Calu3 (cell line): ENCODE measurements at regions of chr2 and their contacts with region 1.

Region 1: DNA sequence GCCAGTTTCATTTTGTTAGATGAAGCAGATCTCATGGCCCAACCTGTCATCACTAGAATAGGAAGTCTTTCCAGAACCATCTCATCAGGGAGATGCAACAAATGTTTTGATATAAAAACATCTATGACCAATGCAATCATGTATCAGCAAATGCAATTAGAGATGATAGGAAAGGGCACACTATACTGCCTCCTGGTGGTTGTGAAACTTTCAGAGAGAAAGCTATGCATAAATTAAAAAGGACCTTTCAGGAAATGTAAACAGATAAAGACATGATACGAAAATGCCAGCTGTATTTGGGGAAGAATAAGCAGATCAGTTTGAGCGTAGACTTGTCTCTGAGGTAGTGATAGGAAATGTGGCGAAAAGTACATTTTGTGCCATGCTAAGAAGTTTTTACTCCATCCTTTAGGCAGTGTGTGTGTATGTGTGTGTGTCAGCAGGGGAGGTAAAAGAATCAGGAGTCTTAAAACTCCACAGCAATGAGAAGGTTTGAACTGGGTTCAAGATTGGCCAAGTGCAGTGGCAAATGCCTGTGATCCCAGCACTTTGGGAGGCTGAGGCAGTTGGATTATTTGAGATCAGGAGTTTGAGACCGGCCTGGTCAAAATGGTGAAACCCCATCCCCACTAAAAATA is 479.3 kb downstream of the CPS1 start:
- DNase-seq: peak; percentile 26
- H3K4me3 Mint-ChIP-seq: no peak overlapping the region
- H3K27ac Mint-ChIP-seq: no peak overlapping the region
- H3K4me1 Mint-ChIP-seq: peaks cover 10% of the 10 kb centered on the region
- H3K27me3 Mint-ChIP-seq: no peaks in the 10 kb centered on the region
- CTCF ChIP-seq: peak; percentile 49

Region 2: DNA sequence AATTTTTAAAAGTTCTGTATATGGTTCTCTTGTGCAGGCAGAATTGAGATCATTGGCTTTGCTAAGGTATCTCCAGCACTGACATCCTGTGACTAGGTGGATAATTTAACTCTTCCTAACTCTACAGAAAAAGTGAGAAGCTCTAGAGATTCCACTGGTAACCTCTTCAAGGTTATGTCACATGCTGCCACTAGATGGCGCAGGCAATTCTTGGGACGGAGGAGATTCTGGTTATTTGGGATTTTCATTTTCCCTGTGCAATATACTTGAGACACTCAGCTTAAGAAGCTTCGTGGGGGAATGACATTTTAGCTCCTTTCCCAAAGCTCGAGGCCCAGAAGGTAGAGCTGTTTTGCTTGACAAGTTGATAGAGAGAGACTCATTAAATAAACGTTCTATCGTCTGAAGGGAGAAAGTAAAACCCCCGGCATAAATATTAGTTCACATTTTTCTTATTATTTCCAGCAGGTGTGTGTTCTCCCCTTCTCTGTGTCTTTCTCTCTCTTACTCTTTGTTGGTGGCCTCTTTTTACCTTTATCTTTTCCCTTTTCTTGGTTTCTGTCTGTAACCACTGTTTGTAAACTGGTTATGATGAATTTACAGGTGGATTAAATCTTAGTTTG is 532.6 kb before region 1 on chr2:
- CTCF ChIA-PET with region 1: interaction called, 4 read pairs
- intact Hi-C with region 1: loop called (anchors 10 kb)
- DNase-seq: peak; percentile 57
- H3K4me3 Mint-ChIP-seq: peak overlapping the region; percentile 64
- H3K27ac Mint-ChIP-seq: peak overlapping the region; percentile 3
- H3K4me1 Mint-ChIP-seq: peaks cover 15% of the 10 kb centered on the region
- H3K27me3 Mint-ChIP-seq: no peaks in the 10 kb centered on the region
- CTCF ChIP-seq: peak; percentile 91

Region 3: GRCh38 chr2:210617732-210618330 is 417.8 kb before region 1 on chr2:
- CTCF ChIA-PET with region 1: no interaction called
- intact Hi-C with region 1: loop called (anchors 1 kb)
- DNase-seq: peak; percentile 39
- H3K4me3 Mint-ChIP-seq: no peak overlapping the region
- H3K27ac Mint-ChIP-seq: no peak overlapping the region
- H3K4me1 Mint-ChIP-seq: no peaks in the 10 kb centered on the region
- H3K27me3 Mint-ChIP-seq: no peaks in the 10 kb centered on the region
- CTCF ChIP-seq: peak; percentile 54

Region 4: GRCh38 chr2:210663631-210664089 is 372.0 kb before region 1 on chr2:
- CTCF ChIA-PET with region 1: no interaction called
- intact Hi-C with region 1: loop called (anchors 1 kb)
- DNase-seq: peak; percentile 21
- H3K4me3 Mint-ChIP-seq: no peak overlapping the region
- H3K27ac Mint-ChIP-seq: no peak overlapping the region
- H3K4me1 Mint-ChIP-seq: no peaks in the 10 kb centered on the region
- H3K27me3 Mint-ChIP-seq: no peaks in the 10 kb centered on the region
- CTCF ChIP-seq: peak; percentile 17

Region 5: DNA sequence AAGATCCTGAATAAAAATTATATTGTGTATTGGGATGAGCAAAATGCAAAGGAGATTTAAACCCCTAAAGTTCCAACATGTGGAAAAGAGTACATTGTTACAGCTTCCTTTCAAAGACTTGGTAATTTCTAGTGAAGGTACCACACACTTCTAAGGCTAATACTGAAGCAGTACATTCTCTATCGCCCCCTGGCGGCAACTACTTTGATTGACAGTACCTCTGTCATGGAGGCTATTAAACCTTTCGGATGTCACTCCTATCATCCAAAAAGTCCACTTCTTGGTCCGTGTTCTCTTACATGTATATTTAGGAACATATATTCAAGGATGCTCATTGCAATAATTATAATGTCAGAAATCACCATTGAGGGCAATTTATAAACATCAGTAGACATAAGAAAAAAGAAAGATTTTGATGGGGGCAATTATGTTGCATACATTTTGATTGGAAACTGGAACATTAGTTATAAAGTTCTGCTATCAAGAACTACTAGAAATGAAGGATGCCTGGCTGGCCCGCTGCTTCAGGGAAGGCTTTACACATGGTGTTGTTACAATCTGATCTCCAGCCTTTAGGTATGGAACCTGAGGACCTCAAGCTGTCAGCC is 122.3 kb after region 1 on chr2:
- CTCF ChIA-PET with region 1: no interaction called
- intact Hi-C with region 1: loop called (anchors 1 kb)
- DNase-seq: peak; percentile 80
- H3K4me3 Mint-ChIP-seq: no peak overlapping the region
- H3K27ac Mint-ChIP-seq: no peak overlapping the region
- H3K4me1 Mint-ChIP-seq: peaks cover 13% of the 10 kb centered on the region
- H3K27me3 Mint-ChIP-seq: no peaks in the 10 kb centered on the region
- CTCF ChIP-seq: peak; percentile 84

Region 6: DNA sequence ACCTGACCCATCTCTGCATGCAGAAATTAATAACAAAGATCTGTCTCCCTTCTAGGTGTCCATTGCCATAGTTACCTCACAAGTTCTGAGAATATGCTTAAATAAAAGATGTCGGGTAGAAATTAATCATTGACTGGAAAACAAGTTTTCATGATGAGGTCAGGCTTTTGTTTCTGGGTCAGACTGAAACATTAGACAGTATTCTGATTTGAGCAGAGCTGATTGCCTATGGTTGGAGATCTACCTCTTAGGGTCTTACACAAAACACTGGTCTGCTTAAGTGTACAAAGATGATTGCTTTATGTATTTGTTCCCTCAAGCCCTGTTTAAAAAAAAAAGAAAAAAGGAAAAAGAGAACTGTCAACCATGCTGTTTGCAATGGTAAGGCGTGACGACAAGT is 477.1 kb after region 1 on chr2:
- CTCF ChIA-PET with region 1: no interaction called
- intact Hi-C with region 1: no loop called
- DNase-seq: no peak
- H3K4me3 Mint-ChIP-seq: no peak overlapping the region
- H3K27ac Mint-ChIP-seq: peak overlapping the region; percentile 78
- H3K4me1 Mint-ChIP-seq: peaks cover 21% of the 10 kb centered on the region
- H3K27me3 Mint-ChIP-seq: no peaks in the 10 kb centered on the region
- CTCF ChIP-seq: no peak

Region 7: DNA sequence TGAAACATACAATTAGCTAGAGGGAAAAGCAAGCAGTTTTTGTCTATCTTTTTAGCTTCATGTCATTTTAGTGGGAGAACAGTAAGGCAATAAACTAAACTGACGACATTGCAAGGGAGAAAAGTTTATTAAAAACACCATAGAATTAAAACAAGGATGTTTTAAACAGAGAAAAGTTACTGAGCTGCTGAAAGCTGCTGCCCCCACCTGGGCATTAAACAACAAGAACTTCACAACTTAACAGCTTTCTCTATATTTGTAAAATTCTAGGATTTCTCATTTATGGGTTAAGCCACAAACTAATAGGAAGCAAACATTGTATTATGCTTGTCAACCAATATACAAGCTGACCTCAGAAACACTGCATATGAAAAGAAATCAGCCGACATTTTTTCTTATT is 1213.8 kb after region 1 on chr2:
- CTCF ChIA-PET with region 1: no interaction called
- intact Hi-C with region 1: loop called (anchors 10 kb)
- DNase-seq: peak; percentile 7
- H3K4me3 Mint-ChIP-seq: no peak overlapping the region
- H3K27ac Mint-ChIP-seq: no peak overlapping the region
- H3K4me1 Mint-ChIP-seq: no peaks in the 10 kb centered on the region
- H3K27me3 Mint-ChIP-seq: no peaks in the 10 kb centered on the region
- CTCF ChIP-seq: no peak

Region 8: GRCh38 chr2:212548450-212548819 is 1512.8 kb after region 1 on chr2:
- CTCF ChIA-PET with region 1: no interaction called
- intact Hi-C with region 1: loop called (anchors 5 kb)
- DNase-seq: peak; percentile 39
- H3K4me3 Mint-ChIP-seq: no peak overlapping the region
- H3K27ac Mint-ChIP-seq: no peak overlapping the region
- H3K4me1 Mint-ChIP-seq: no peaks in the 10 kb centered on the region
- H3K27me3 Mint-ChIP-seq: no peaks in the 10 kb centered on the region
- CTCF ChIP-seq: peak; percentile 37